ENCODE measurements at regions of chr7 and their contacts with region 1.

Region 1: DNA sequence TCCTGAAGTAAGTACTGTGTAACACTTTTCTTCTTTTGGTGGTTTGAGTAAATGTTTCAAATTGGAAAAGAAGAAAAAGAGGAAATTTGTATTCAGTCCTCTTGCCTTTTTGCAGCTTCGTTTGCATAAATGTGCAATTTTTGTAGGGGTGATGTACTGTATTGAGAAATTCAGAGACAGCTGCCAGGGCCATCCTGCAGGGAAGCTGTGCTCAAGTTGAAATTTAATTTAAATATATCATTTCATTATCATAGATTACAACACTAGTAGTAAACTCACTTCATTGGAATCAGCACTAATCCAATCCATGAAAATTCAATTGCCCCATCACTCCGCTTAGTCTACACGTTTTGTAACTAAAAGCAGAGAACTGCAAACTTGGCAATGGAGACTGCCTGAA is 415.4 kb downstream of the DNAJB9 start:
- DNase-seq: no peak
- ATAC-seq: no peak
- H3K4me3 ChIP-seq: no peak overlapping the region
- H3K27ac ChIP-seq: no peak overlapping the region
- H3K4me1 ChIP-seq: no peaks in the 10 kb centered on the region
- H3K27me3 ChIP-seq: no peaks in the 10 kb centered on the region
- CTCF ChIP-seq: no peak
- POLR2A ChIP-seq: no peak
- RAD21 ChIP-seq: no peak

Region 2: GRCh38 chr7:109479388-109479787 is 494.4 kb after region 1 on chr7:
- CTCF ChIA-PET with region 1: no interaction called
- POLR2A ChIA-PET with region 1: no interaction called
- RAD21 ChIA-PET with region 1: no interaction called
- intact Hi-C with region 1: loop called (anchors 10 kb)
- DNase-seq: no peak
- ATAC-seq: peak; percentile 88
- H3K4me3 ChIP-seq: no peak overlapping the region
- H3K27ac ChIP-seq: no peak overlapping the region
- H3K4me1 ChIP-seq: no peaks in the 10 kb centered on the region
- H3K27me3 ChIP-seq: no peaks in the 10 kb centered on the region
- CTCF ChIP-seq: peak; percentile 10 to 37 (median 24); a peak in 3 of 6 replicates
- POLR2A ChIP-seq: no peak
- RAD21 ChIP-seq: peak; percentile 44